AG04449 (cell line): ENCODE measurements at regions of chr1 and their contacts with region 1.

Region 1: DNA sequence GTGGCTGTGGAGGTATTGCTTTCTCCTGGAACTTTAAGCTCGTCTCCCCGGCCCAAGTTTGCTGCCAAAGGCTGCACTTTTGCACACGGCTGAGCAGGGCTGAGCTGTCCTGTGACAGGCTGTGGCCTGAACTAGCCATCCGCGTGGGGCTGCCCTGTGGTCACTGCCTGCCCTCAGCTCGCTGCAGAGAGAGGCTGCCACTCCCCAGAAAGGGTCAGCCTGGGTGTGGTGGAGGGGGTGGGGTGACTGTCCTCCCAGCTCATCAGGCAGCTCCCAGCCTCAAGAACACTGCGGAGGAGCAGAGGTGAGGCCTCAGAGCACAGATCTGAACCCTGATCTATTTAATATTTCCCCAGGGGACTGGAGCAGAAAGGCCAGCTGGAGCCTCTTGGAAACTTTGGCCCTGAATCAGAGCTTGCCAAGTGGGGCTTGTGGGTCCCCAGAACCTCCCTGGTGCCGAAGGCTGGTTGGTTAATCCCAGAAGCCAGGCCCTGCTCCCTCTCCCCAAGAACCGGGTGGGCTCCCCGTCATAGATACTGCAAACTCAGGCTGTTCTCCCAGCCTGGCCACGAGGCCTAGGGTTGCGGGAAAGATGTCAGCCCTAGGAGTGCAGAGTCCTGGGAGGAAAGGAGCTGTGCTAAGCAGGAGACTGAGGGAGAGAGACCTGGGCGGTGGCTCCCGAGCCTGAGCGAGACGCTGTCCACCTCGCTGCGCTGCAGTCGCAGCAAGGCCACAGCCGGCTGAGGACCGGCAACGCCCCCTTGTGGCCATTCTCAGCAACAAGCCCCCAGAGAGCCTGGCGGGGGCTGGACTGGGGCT is 125.1 kb upstream of the IPO9 start:
- DNase-seq: no peak
- H3K4me3 ChIP-seq: no peak overlapping the region
- CTCF ChIP-seq: peak; percentile 94

Region 2: DNA sequence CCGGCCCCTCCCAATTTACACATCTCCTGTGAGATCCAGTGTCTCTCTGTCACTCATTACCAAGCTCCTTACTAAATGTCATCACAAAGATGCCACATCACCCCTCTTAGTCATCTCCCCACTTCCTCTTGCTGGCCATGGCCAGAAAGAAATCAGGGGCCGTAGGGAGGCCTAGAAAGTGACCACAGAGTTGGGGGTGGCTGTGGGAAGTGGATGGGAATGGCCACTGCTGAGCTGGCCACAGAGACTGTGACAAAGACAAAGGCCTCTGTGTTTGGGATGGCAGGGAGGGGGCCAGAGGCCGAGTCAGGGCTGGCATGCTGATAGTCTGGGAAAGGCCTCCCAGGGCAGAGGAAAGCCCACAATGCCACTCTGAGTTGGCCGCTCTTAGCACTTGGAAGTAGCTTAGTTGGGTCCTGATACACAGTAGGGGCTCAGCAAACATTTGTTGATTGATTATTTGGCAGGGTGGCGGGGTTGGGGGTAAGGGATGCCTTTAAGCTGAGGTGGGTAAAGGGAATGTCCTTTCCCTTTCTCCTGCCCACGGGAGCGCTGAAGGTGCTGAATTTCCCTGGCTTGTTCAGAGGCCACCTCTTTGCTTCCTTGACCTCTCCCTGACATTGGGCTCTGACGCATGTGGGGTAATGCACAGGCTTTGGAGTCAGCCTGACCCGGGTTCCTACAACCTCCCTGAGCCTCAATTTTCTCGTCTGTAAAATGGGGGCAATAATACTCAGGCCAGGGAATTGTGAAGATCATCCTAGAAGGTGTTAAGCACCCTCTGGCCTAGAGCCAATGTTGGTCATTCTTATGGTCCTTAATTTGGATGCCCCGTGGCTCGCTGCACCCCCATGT is 151.7 kb before region 1 on chr1:
- CTCF ChIA-PET with region 1: interaction called, 421 read pairs
- POLR2A ChIA-PET with region 1: no interaction called
- DNase-seq: no peak
- H3K4me3 ChIP-seq: no peak overlapping the region
- CTCF ChIP-seq: no peak

Region 3: DNA sequence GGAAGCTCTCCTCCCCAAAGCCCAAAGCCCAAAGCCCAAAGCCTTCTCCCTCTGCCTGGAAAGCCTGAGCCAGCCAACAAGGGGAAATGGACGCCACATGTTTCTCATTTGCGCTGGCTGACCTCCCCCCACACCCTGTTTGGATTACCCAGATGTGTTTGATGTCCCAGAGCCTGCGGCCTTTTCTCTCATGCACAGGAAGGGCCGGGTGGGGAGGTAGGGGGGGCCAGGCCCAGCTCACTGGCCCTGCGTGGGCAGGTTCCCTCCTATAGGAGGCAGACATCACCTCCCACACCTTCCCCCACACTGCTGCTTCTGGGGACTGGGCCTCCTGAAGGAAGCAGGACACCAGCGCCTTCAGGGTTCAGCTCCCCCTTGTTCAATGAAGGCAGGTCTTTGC is 48.6 kb before region 1 on chr1:
- CTCF ChIA-PET with region 1: interaction called, 44 read pairs
- POLR2A ChIA-PET with region 1: interaction called, 4 read pairs
- DNase-seq: no peak
- H3K4me3 ChIP-seq: no peak overlapping the region
- CTCF ChIP-seq: peak; percentile 24

Region 4: GRCh38 chr1:201676197-201676596 is 27.6 kb before region 1 on chr1:
- CTCF ChIA-PET with region 1: interaction called, 12 read pairs
- POLR2A ChIA-PET with region 1: no interaction called
- DNase-seq: no peak
- H3K4me3 ChIP-seq: no peak overlapping the region
- CTCF ChIP-seq: no peak